ENCODE measurements at regions of chr5 and their contacts with region 1.

Region 1: GRCh38 chr5:93078082-93079038 is 502.7 kb downstream of the NR2F1-AS1 start:
- DNase-seq: peak; percentile 99
- H3K4me3 ChIP-seq: no peak overlapping the region
- H3K27ac ChIP-seq: peak overlapping the region; percentile 89
- H3K4me1 ChIP-seq: peaks cover 18% of the 10 kb centered on the region
- H3K27me3 ChIP-seq: no peaks in the 10 kb centered on the region
- CTCF ChIP-seq: no peak
- POLR2A ChIP-seq: peak; percentile 50

Region 2: GRCh38 chr5:92309336-92309991 is 768.9 kb before region 1 on chr5:
- CTCF ChIA-PET with region 1: no interaction called
- POLR2A ChIA-PET with region 1: no interaction called
- dilution Hi-C with region 1: no loop called
- intact Hi-C with region 1: loop called (anchors 10 kb)
- DNase-seq: peak; percentile 31
- H3K4me3 ChIP-seq: no peak overlapping the region
- H3K27ac ChIP-seq: no peak overlapping the region
- H3K4me1 ChIP-seq: no peaks in the 10 kb centered on the region
- H3K27me3 ChIP-seq: no peaks in the 10 kb centered on the region
- CTCF ChIP-seq: peak in 1 of 2 donors; percentile 24
- POLR2A ChIP-seq: no peak

Region 3: GRCh38 chr5:93189707-93190120 is 111.4 kb after region 1 on chr5:
- CTCF ChIA-PET with region 1: no interaction called
- POLR2A ChIA-PET with region 1: no interaction called
- dilution Hi-C with region 1: no loop called
- intact Hi-C with region 1: no loop called
- DNase-seq: peak; percentile 62
- H3K4me3 ChIP-seq: no peak overlapping the region
- H3K27ac ChIP-seq: no peak overlapping the region
- H3K4me1 ChIP-seq: peaks cover 36% of the 10 kb centered on the region
- H3K27me3 ChIP-seq: no peaks in the 10 kb centered on the region
- CTCF ChIP-seq: no peak
- POLR2A ChIP-seq: no peak

Region 4: GRCh38 chr5:93208141-93208751 is 129.9 kb after region 1 on chr5:
- CTCF ChIA-PET with region 1: no interaction called
- POLR2A ChIA-PET with region 1: no interaction called
- dilution Hi-C with region 1: no loop called
- intact Hi-C with region 1: no loop called
- DNase-seq: no peak
- H3K4me3 ChIP-seq: no peak overlapping the region
- H3K27ac ChIP-seq: no peak overlapping the region
- H3K4me1 ChIP-seq: no peaks in the 10 kb centered on the region
- H3K27me3 ChIP-seq: no peaks in the 10 kb centered on the region
- CTCF ChIP-seq: no peak
- POLR2A ChIP-seq: no peak

Region 5: GRCh38 chr5:93249651-93250289 is 171.4 kb after region 1 on chr5:
- CTCF ChIA-PET with region 1: no interaction called
- POLR2A ChIA-PET with region 1: no interaction called
- dilution Hi-C with region 1: no loop called
- intact Hi-C with region 1: loop called (anchors 5 kb)
- DNase-seq: peak; percentile 87
- H3K4me3 ChIP-seq: peak overlapping the region in 2 of 3 experiments; percentile 14 to 58
- H3K27ac ChIP-seq: peak overlapping the region; percentile 88
- H3K4me1 ChIP-seq: peaks cover 26% of the 10 kb centered on the region
- H3K27me3 ChIP-seq: no peaks in the 10 kb centered on the region
- CTCF ChIP-seq: no peak
- POLR2A ChIP-seq: peak; percentile 57

Region 6: GRCh38 chr5:93512799-93513198 is 434.4 kb after region 1 on chr5:
- CTCF ChIA-PET with region 1: no interaction called
- POLR2A ChIA-PET with region 1: no interaction called
- dilution Hi-C with region 1: no loop called
- intact Hi-C with region 1: loop called (anchors 2 kb)
- DNase-seq: peak; percentile 95
- H3K4me3 ChIP-seq: no peak overlapping the region
- H3K27ac ChIP-seq: peak overlapping the region; percentile 86
- H3K4me1 ChIP-seq: peaks cover 25% of the 10 kb centered on the region
- H3K27me3 ChIP-seq: no peaks in the 10 kb centered on the region
- CTCF ChIP-seq: no peak
- POLR2A ChIP-seq: no peak

Measured in endothelial cell of umbilical vein (primary cell).